Astrocyte of the cerebellum (primary cell): ENCODE measurements at regions of chr16 and their contacts with region 1.

Region 1: DNA sequence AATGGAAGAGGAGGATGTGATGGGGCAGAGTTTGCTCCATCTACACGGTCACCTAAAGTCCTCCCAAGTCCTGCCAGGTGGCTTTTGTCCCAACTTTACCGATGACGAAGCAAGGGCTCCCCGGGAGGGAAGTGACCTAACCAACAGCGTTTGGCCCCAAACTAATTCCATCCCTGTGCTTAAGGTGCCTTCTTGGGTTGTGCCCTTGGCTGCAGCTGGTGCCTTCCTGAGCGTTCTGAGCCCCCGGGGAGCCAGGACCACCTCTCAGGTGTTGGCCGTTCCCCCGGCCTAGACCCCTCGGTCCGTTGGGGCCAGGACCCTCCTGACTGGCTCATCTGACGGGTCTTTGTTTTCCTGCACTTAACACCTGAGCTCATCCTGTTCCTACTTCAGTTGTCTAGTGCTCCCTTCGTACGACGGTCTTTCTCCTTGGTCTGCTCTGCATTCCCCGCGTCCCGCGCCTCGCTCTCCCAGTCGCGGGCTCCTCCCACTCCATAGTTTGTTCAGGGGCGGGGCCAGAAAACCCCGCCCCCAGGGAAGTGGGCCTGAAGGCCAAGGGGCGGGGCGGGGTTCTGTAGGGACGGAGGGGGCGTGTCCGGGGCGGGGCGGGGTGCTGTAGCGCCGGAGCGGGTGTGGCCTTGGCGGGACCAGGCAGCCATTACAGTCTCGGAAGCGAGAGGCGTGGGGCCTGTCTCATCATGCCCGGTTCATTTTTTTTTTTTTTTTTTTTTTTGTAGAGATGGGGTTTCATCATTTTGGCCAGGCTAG is 822 bp upstream of the ZSCAN10 start:
- DNase-seq: peak; percentile 20
- H3K4me3 ChIP-seq: peak overlapping the region; percentile 6
- CTCF ChIP-seq: no peak

Region 2: DNA sequence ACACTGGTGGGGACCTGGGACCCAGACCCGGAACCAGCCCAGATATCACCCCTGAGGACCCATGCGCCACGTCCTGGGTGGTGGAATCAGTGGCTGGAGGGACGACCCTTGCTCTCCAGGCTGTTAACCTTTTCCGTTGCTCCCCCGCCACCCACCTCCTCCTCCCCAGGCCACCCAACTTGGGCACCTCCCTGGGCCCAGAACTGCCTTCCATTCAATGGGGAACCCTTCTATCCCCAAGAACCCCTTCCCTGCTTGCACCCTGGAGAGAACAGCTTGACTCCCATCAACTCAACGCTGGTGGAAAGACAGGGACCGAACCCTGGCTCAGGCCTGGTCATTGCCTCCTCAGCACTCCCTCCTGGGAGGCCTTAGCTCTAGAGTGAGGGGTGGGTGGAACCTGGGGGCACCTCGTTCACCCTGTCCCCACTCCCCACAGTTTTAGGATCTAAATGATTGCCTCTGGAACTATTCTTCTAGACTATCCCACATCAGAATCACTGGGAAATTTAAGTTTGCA is 40.1 kb before region 1 on chr16:
- in situ Hi-C with region 1: loop called (anchors 5 kb)
- DNase-seq: no peak
- H3K4me3 ChIP-seq: peak overlapping the region; percentile 84
- CTCF ChIP-seq: no peak